ENCODE measurements at regions of chr11 and their contacts with region 1.

Region 1: DNA sequence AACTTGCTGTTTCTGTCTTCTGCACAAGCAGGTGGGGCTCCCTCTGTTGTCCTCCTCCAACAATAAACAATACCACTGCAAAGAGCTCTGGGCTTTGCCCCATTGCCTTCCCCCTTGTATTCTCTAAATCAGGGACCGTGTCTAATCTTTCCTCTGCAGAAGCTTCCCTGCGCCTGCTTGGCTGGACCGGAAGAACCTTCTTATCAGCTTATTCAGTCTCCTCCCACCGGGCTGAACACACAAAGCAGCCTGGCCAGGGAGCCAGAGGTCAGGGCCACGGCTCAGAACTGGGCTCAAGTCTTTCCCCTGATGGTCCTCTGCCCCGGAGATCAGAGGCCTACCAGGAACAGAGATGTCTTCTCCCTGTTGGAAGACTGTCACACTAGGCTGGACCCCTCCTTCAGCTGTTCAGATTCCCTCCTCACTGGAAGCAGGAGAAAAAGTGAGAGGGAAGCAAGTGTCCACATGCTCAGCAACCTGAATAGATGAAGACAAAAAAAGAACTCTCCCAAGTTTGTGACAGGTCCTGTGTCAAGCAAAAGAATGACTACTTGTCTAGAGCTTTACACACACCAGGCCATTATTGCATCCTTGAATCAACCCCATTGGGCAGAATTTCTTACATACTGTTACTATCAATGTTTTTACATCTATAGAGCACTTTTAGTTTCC is 63.7 kb downstream of the RAB30 start:
- DNase-seq: peak; percentile 55
- H3K4me3 ChIP-seq: peak overlapping the region; percentile 14
- H3K27ac ChIP-seq: peak overlapping the region; percentile 81
- H3K4me1 ChIP-seq: peaks cover 82% of the 10 kb centered on the region
- H3K27me3 ChIP-seq: no peaks in the 10 kb centered on the region
- CTCF ChIP-seq: no peak

Region 2: GRCh38 chr11:83063073-83063754 is 55.2 kb after region 1 on chr11:
- intact Hi-C with region 1: loop called (anchors 10 kb)
- DNase-seq: no peak
- H3K4me3 ChIP-seq: peak overlapping the region; percentile 29
- H3K27ac ChIP-seq: peak overlapping the region; percentile 60
- H3K4me1 ChIP-seq: peaks cover 61% of the 10 kb centered on the region
- H3K27me3 ChIP-seq: no peaks in the 10 kb centered on the region
- CTCF ChIP-seq: no peak

Region 3: DNA sequence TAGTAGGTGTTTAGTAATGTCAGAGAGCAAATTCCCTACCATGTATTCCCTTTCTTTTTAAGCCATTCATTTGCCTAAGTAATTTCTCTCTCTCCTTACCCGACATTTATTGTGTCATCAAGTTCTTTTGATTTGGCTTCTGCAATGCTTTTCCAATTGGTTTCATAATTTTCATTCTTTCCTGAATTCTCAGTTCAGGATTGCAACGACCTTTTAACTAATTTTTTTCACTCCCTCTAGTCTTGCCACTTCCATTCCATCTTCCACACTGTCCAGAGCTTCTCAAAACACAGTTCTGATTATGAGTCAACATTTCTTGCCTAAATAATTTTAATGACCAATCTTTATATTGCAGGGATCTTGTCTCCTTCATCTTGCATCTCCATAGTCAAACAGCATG is 104.8 kb after region 1 on chr11:
- intact Hi-C with region 1: no loop called
- DNase-seq: no peak
- H3K4me3 ChIP-seq: no peak overlapping the region
- H3K27ac ChIP-seq: no peak overlapping the region
- H3K4me1 ChIP-seq: peaks cover 13% of the 10 kb centered on the region
- H3K27me3 ChIP-seq: no peaks in the 10 kb centered on the region
- CTCF ChIP-seq: no peak